ENCODE measurements at regions of chr2 and their contacts with region 1.

Region 1: GRCh38 chr2:20525041-20526035 is 78.5 kb downstream of the RHOB start:
- DNase-seq: peak; percentile 34 to 37
- ATAC-seq: peak; percentile 34 to 79 (median 62)
- H3K4me3 ChIP-seq: no peak overlapping the region
- H3K27ac ChIP-seq: peak overlapping the region; percentile 28 to 88 (median 73)
- H3K4me1 ChIP-seq: peaks cover 26 to 70% (median 47%) of the 10 kb centered on the region in 9 donors
- H3K27me3 ChIP-seq: no peaks in the 10 kb centered on the region
- CTCF ChIP-seq: no peak

Region 2: DNA sequence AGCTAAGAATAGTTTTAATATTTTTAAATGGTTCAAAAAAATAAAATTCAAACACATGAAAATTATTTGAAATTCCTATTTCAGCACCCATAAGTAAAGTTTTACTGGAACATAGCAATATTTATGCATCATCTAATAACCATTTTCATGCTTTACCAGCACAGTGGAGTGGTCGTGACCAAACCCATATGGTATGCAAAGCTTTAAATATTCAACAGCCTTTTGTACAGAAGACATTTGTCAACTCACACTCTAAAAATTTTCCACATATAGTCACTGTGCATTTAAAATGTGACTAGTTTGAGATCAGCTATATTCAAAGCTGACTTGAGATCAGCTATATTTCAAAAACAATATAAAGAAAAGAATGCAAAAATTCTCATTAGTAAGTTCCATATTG is 220.9 kb before region 1 on chr2:
- intact Hi-C with region 1: no loop called
- DNase-seq: no peak
- ATAC-seq: no peak
- H3K4me3 ChIP-seq: no peak overlapping the region
- H3K27ac ChIP-seq: no peak overlapping the region
- H3K4me1 ChIP-seq: peaks cover 0 to 4% (median 0%) of the 10 kb centered on the region in 9 donors
- H3K27me3 ChIP-seq: no peaks in the 10 kb centered on the region
- CTCF ChIP-seq: no peak

Region 3: GRCh38 chr2:20446917-20447436 is 78.4 kb before region 1 on chr2 and contains the start of gene RHOB:
- intact Hi-C with region 1: loop called in 6 of 10 experiments (anchors 2 to 10 kb)
- DNase-seq: peak; percentile 96 to 97
- ATAC-seq: peak; percentile 88 to 93 (median 90)
- H3K4me3 ChIP-seq: peak within 1 kb of the TSS; percentile 81 to 97 (median 93)
- H3K27ac ChIP-seq: peak within 1 kb of the TSS; percentile 95 to 100 (median 99)
- H3K4me1 ChIP-seq: peaks cover 13 to 61% (median 52%) of the 10 kb centered on the region in 9 donors
- H3K27me3 ChIP-seq: no peaks in the 10 kb centered on the region
- CTCF ChIP-seq: peak in 2 of 9 donors; percentile 4 to 7
- total RNA-seq, gene RHOB: 105 to 313 (median 157) TPM

Region 4: GRCh38 chr2:20483194-20483895 is 42.0 kb before region 1 on chr2:
- intact Hi-C with region 1: loop called in 1 of 10 experiments (anchors 5 kb)
- DNase-seq: no peak
- ATAC-seq: peak in 6 of 8 donors; percentile 20 to 73 (median 46)
- H3K4me3 ChIP-seq: no peak overlapping the region
- H3K27ac ChIP-seq: peak overlapping the region in 5 of 10 donors; percentile 27 to 46 (median 44)
- H3K4me1 ChIP-seq: peaks cover under 1 to 40% (median 15%) of the 10 kb centered on the region in 9 donors
- H3K27me3 ChIP-seq: no peaks in the 10 kb centered on the region
- CTCF ChIP-seq: no peak

Region 5: GRCh38 chr2:20578895-20579825 is 53.8 kb after region 1 on chr2:
- intact Hi-C with region 1: loop called in 4 of 10 experiments (anchors 2 to 5 kb)
- DNase-seq: peak; percentile 73 to 92
- ATAC-seq: peak; percentile 85 to 94 (median 91)
- H3K4me3 ChIP-seq: no peak overlapping the region
- H3K27ac ChIP-seq: peak overlapping the region; percentile 57 to 95 (median 82)
- H3K4me1 ChIP-seq: peaks cover 28 to 83% (median 70%) of the 10 kb centered on the region in 9 donors
- H3K27me3 ChIP-seq: no peaks in the 10 kb centered on the region
- CTCF ChIP-seq: no peak

Region 6: DNA sequence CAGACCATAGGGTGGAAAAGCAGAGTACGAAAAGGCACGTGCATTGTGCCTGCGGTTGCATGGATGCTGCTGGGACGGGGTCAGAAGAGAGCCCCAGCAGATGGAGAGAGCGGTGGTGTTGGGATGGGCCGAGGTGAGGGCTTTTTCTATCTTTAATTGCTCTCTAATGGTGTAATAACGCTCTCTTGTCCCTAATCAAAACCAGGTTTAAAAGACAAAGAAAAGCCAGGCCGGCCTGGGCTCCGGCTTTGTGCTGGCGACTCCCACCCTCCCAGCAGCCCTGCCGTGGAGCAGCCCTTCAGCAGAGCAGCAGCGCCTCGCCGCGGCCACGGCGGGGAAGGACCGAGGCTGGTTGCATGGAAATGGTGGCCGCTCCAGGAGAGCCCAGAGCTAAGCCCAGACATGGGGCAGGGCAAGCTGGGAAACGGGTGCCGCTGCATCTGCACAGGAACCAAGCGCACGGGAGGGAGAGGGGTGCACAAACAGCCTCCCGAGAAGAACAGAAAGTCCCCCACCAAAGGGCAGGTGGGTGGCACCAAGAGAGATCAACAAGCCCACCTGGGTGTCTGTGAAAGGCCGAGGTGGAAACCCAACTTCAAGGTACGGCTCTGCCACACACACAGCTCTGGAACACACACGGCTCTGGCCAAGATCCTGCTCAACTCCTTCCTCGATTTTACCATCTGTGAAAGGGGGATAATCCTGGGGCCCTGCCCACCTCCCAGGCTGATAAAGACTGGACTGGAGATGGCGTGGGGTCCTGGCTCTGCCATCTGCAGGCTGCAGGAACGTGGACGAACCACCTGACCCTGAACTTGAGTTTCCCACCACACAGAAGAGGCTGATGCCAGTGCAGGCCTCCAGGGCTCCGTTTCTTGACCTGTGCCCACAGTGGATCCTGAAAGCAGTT is 110.6 kb after region 1 on chr2:
- intact Hi-C with region 1: loop called in 3 of 10 experiments (anchors 5 to 10 kb)
- DNase-seq: peak; percentile 88 to 91
- ATAC-seq: peak; percentile 80 to 93 (median 90)
- H3K4me3 ChIP-seq: peak overlapping the region in 1 of 10 donors; percentile 11
- H3K27ac ChIP-seq: peak overlapping the region; percentile 32 to 87 (median 74)
- H3K4me1 ChIP-seq: peaks cover 32 to 72% (median 49%) of the 10 kb centered on the region in 9 donors
- H3K27me3 ChIP-seq: no peaks in the 10 kb centered on the region
- CTCF ChIP-seq: peak; percentile 88 to 98 (median 94)